Activated CD8-positive, alpha-beta T cell treated with anti-CD3 and anti-CD28 coated beads for 36 hours (primary cell): ENCODE measurements at regions of chr10 and their contacts with region 1.

Region 1: GRCh38 chr10:79487296-79488194 is 24.8 kb upstream of the EIF5AL1 start:
- DNase-seq: peak; percentile 48
- ATAC-seq: peak; percentile 90
- H3K4me3 Mint-ChIP-seq: no peak overlapping the region
- H3K27ac Mint-ChIP-seq: no peak overlapping the region
- H3K4me1 Mint-ChIP-seq: no peaks in the 10 kb centered on the region
- H3K27me3 Mint-ChIP-seq: no peaks in the 10 kb centered on the region
- CTCF ChIP-seq: peak; percentile 57

Region 2: DNA sequence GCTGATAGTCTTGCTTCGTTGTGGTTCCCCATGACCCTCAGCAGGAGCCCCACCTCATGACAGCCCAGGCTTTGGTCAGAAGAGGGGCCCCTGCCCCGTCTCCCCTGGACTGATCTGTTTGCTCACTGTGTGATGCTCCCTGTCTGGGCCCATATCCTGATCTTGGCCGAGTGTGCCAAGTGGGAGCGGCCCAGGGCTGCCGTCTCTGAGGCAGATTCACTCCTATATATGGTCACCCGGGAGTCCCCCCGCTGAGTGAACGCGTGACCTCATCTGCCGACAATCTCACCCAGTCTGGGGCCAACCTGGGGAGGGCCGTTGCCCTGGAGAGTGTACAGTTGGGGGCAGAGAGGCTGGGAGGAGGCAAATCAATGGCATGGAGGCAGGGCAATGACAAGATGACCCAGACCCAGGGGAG is 105.7 kb before region 1 on chr10:
- CTCF ChIA-PET with region 1: no interaction called
- POLR2A ChIA-PET with region 1: no interaction called
- intact Hi-C with region 1: loop called (anchors 5 kb)
- DNase-seq: no peak
- ATAC-seq: no peak
- H3K4me3 Mint-ChIP-seq: no peak overlapping the region
- H3K27ac Mint-ChIP-seq: no peak overlapping the region
- H3K4me1 Mint-ChIP-seq: no peaks in the 10 kb centered on the region
- H3K27me3 Mint-ChIP-seq: no peaks in the 10 kb centered on the region
- CTCF ChIP-seq: no peak

Region 3: DNA sequence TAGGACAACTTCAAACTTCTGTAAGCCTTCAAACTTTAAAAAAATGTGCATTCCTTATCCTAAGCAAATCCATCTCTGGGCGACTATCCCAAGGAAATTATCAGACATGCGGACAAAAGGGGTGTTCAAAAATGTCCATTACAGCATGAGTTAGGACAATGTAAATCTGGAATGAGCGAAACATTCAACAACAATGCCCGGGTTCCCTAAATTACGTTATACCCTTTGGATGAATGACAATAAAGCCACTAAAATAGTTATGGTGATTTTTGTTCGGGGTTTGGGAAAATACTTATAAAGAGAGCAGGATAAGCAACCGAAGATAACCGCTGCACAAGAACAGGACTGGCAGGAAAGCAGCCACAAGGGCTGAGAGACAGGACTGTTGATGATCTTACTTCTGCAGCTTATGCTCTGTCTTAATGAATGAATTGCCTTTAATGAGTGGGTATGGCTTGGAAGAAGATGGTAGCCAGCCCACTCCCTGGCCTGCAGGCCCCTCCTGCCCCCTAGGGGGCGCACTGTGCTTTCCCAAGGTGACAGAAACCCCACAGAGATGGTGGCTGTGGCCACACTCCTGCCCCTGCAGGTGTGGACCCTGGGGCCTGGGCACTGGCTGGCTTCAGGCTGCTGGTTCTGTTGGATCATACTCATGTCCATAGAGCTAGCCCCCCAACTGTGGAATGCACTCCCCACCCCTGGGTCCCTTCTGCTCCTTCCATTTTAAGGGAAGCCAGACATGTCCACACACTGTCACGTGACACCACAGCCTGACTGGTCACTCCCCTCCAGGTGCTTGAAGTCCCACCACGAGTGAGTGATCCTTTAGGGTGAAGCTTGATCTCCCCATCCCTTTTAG is 87.2 kb before region 1 on chr10:
- CTCF ChIA-PET with region 1: interaction called, 11 read pairs
- POLR2A ChIA-PET with region 1: no interaction called
- intact Hi-C with region 1: no loop called
- DNase-seq: peak; percentile 83
- ATAC-seq: peak; percentile 89
- H3K4me3 Mint-ChIP-seq: no peak overlapping the region
- H3K27ac Mint-ChIP-seq: no peak overlapping the region
- H3K4me1 Mint-ChIP-seq: no peaks in the 10 kb centered on the region
- H3K27me3 Mint-ChIP-seq: no peaks in the 10 kb centered on the region
- CTCF ChIP-seq: peak; percentile 70

Region 4: DNA sequence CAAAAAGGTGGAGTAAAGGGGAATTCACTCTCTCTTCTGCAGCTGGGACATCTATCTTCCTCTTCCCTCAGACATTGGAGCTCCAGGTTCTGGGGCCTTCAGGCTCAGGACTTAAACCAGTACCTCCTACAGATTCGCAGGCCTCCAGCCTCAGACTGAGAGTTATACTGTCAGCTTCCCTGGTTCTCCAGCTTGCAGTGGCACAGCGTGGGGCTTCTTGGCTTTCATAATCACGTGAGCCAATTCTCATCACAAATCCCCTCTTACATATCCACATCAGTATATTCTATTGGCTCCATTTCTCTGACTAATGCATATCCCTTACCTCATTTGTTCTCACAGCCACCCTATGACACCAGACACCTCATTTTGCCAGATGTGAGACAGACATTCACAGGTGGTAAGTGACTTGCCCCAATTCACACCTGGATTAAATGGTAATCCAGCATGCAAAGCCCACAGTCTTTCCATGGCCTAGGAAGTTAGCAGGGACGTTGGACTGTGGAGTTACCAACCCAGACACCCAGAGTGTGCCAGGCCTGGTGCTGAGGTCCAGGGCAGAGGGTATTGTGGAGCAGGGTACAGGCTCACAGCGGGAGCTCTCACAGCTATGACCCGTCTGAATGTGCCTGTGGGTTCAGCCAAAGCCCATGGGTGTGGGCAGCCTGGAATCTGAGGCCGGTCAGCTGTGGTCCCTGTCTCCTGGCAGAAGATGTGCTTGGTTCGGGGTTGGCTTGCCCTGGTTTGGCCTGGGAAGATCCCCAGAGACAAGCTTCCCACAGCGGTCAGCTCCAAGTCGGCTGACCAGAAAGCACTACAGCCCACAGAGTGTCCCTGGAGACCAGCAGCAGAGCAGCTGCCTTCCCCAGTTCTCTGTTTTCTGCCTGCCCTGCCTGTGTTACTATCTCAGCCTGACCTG is 23.7 kb before region 1 on chr10:
- CTCF ChIA-PET with region 1: interaction called, 24 read pairs
- POLR2A ChIA-PET with region 1: interaction called, 4 read pairs
- intact Hi-C with region 1: no loop called
- DNase-seq: no peak
- ATAC-seq: no peak
- H3K4me3 Mint-ChIP-seq: no peak overlapping the region
- H3K27ac Mint-ChIP-seq: no peak overlapping the region
- H3K4me1 Mint-ChIP-seq: no peaks in the 10 kb centered on the region
- H3K27me3 Mint-ChIP-seq: peaks cover 2% of the 10 kb centered on the region
- CTCF ChIP-seq: no peak

Region 5: DNA sequence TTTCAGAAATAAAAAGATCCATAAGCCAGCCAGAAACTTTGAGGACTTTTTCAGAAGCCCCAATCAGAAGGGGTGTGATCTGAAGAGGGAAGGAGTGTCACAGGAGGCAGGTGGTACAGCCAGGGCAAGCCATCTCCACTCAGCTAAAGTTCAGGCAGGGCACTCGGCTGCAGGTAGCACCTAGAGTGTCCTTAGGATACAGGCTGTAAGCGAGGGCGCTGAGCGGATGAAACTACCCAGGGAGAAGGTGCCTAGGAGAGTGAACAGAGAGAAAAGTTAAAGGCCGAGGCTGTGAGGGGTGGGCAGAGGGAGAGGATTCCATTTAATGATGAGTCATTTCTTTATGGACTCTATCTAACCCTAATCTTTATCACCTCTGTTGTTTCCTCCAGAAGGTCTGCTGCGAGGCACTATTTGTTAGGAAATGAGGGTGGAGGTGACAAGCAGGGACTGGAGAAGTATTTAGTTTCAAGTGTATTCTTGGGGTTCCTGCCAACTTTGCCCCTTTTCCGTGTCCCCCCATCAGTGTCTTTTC is 12.4 kb before region 1 on chr10:
- CTCF ChIA-PET with region 1: interaction called, 24 read pairs
- POLR2A ChIA-PET with region 1: interaction called, 3 read pairs
- intact Hi-C with region 1: no loop called
- DNase-seq: no peak
- ATAC-seq: no peak
- H3K4me3 Mint-ChIP-seq: no peak overlapping the region
- H3K27ac Mint-ChIP-seq: no peak overlapping the region
- H3K4me1 Mint-ChIP-seq: no peaks in the 10 kb centered on the region
- H3K27me3 Mint-ChIP-seq: peaks cover 10% of the 10 kb centered on the region
- CTCF ChIP-seq: no peak